ENCODE measurements at regions of chr22 and their contacts with region 1.

Region 1: GRCh38 chr22:46661221-46661851 is 41.1 kb downstream of the GRAMD4 start:
- DNase-seq: no peak
- ATAC-seq: no peak
- H3K4me3 Mint-ChIP-seq: no peak overlapping the region
- H3K27ac Mint-ChIP-seq: peak overlapping the region; percentile 81; the same call in 1 of the 2 replicates
- H3K4me1 Mint-ChIP-seq: peaks cover 5% of the 10 kb centered on the region
- H3K27me3 Mint-ChIP-seq: no peaks in the 10 kb centered on the region
- CTCF ChIP-seq: no peak

Region 2: DNA sequence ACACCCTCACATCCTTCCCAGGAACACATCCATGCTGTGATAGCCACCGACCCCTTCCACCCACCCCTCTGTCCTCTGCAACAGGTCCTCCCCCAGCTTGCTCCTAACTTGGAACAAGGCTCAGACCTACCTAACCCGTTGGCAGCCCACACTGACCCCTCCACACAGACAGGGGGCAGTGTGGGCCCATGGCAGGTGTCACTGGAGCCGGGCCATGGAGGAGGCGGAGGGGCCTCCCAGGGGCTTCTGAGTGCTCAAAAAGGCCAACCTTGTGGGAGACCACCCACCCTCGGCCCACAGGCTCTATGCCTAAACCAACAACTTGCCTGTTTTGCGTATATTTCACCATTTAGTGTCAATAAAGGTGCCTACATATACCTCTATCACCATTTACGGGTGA is 19.7 kb after region 1 on chr22:
- CTCF ChIA-PET with region 1: interaction called, 11 read pairs
- POLR2A ChIA-PET with region 1: no interaction called
- DNase-seq: peak; percentile 52
- ATAC-seq: peak; percentile 81
- H3K4me3 Mint-ChIP-seq: no peak overlapping the region
- H3K27ac Mint-ChIP-seq: no peak overlapping the region
- H3K4me1 Mint-ChIP-seq: 0 out of 2 replicates have a peak, but pooled peaks cover 4% of the 10 kb centered on the region
- H3K27me3 Mint-ChIP-seq: no peaks in the 10 kb centered on the region
- CTCF ChIP-seq: peak; percentile 35; the same call in 1 of the 2 replicates